ENCODE measurements at regions of chr13 and their contacts with region 1.

Region 1: GRCh38 chr13:44912278-44913016 is 76.8 kb downstream of the NUFIP1 start:
- DNase-seq: no peak
- ATAC-seq: no peak
- H3K4me3 ChIP-seq: no peak overlapping the region
- H3K4me3 Mint-ChIP-seq: no peak overlapping the region
- H3K27ac ChIP-seq: no peak overlapping the region
- H3K27ac Mint-ChIP-seq: no peak overlapping the region
- H3K4me1 ChIP-seq: no peaks in the 10 kb centered on the region
- H3K4me1 Mint-ChIP-seq: peaks cover 14% of the 10 kb centered on the region
- H3K27me3 ChIP-seq: no peaks in the 10 kb centered on the region
- H3K27me3 Mint-ChIP-seq: peaks cover 3% of the 10 kb centered on the region
- CTCF ChIP-seq: no peak

Region 2: DNA sequence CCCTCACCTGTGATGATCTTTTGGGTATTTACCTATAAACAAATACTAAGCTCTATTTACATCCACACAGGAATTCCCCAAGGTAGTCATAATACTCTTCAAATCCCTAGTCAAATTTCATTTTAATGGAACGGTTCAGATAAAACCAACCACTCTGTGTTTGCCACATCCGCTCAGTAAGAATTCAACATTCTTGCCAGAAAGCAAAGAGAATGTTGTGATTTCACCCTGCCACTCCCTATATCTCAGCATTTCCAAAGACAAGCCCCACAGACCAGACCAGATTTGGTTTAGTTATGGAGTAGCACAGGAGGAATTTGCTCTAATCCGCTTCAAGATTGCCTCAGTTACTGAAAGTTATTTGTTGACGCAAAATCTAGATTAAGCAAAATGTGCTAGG is 644.5 kb before region 1 on chr13:
- CTCF ChIA-PET with region 1: no interaction called
- POLR2A ChIA-PET with region 1: no interaction called
- intact Hi-C with region 1: loop called (anchors 5 kb)
- DNase-seq: no peak
- ATAC-seq: no peak
- H3K4me3 ChIP-seq: no peak overlapping the region
- H3K4me3 Mint-ChIP-seq: no peak overlapping the region
- H3K27ac ChIP-seq: no peak overlapping the region
- H3K27ac Mint-ChIP-seq: no peak overlapping the region
- H3K4me1 ChIP-seq: no peaks in the 10 kb centered on the region
- H3K4me1 Mint-ChIP-seq: no peaks in the 10 kb centered on the region
- H3K27me3 ChIP-seq: no peaks in the 10 kb centered on the region
- H3K27me3 Mint-ChIP-seq: no peaks in the 10 kb centered on the region
- CTCF ChIP-seq: no peak

Measured in CD8-positive, alpha-beta T cell (primary cell).